Naive thymus-derived CD4-positive, alpha-beta T cell (primary cell): ENCODE measurements at regions of chr3 and their contacts with region 1.

Region 1: DNA sequence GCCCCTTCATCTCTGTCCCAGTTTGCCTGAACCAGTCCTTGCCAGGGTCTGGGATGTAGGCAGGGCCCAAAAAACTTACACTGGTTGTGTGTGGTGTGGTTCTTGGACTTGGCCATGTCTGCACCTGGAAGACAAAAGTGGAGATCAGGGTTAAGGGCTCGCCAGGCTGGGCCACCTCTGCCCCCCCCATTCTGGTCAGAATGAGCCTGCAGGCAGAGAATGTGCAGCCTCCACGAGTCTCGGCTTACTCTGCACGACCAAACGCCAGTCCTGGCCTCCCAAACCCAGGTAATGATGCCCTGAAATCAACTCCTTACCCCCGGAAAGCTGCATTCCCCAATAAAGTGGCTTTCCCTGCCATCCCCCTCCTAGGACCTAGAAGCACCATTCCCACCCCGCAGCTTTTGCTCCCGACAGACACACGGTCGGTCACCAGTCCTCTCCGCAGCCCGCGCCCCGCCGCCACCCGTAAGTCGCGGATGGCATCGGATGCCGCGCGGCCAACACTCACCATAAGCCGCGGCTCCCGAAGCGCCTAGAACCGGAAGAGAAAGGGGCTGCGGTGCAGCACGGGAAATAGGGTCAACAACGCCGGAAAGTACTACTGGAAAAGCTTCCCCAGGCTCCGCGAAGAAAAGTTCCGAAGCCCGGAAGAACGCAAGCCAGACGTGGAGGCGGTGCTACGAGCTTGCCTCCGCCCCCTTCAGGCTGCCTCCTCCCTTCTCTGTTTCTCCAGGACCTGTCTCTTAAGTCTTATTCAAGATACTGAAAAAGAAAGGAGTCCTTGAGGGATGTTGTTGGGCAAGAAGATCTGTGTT is at the start of gene RPL29:
- DNase-seq: peak; percentile 80 to 95 (median 92)
- ATAC-seq: peak; percentile 99
- H3K4me3 ChIP-seq: peak within 1 kb of the TSS; percentile 98
- H3K4me3 Mint-ChIP-seq: peak within 1 kb of the TSS; percentile 92 to 100 (median 98)
- H3K27ac ChIP-seq: peak within 1 kb of the TSS; percentile 95
- H3K27ac Mint-ChIP-seq: peak within 1 kb of the TSS; percentile 98 to 100 (median 100)
- H3K4me1 ChIP-seq: peaks cover 13 to 15% of the 10 kb centered on the region in 2 donors
- H3K4me1 Mint-ChIP-seq: peaks cover 19 to 44% (median 31%) of the 10 kb centered on the region in 7 donors
- H3K27me3 ChIP-seq: no peaks in the 10 kb centered on the region
- H3K27me3 Mint-ChIP-seq: peaks cover 0 to 16% (median 0%) of the 10 kb centered on the region in 5 donors
- total RNA-seq, gene RPL29: 1,152 to 1,744 (median 1,537) TPM

Region 2: DNA sequence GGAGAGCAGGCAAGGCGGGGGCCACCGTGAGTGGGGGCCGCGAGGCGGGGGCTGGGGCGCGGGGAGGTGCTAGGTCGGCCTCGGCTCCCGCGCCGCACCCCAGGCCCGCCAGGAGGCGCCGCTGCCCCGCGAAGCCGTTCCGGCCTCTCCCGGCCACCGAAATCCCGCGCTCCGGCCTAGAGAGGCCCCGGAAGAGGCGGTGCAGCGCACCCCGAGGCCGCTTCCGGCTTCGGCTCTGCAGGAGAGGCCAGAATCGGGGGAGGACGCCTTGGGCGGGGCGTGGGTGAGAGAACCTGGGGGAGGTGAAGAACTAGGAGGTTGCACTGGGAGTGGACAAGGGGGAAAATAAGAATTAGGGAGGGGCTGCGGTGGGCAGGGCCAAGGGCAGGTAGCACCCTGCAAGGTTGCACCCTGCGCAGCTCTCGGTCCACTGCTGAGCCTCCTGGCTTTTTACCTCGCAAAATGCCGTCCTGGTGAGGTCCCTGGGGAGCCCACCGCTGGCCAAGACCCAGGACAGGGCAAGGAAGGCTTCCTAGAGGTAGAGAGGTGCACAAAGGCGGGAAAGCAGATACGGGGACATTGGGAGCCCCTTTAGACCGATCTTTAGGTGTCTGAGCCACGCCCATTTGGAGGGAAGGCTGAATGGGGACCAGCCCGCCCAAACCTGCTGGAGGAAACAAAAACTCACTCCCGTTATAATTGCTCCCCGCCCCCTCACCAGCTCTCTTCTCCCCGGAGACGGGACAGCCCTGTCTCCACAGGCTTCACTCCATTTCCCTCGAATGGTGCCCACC is 1768.0 kb before region 1 on chr3:
- CTCF ChIA-PET with region 1: no interaction called
- POLR2A ChIA-PET with region 1: interaction called, 11 read pairs
- intact Hi-C with region 1: no loop called
- DNase-seq: peak; percentile 86 to 96 (median 91)
- ATAC-seq: peak; percentile 91
- H3K4me3 ChIP-seq: peak overlapping the region; percentile 88
- H3K4me3 Mint-ChIP-seq: peak overlapping the region; percentile 89 to 98 (median 96)
- H3K27ac ChIP-seq: peak overlapping the region; percentile 77
- H3K27ac Mint-ChIP-seq: peak overlapping the region; percentile 86 to 97 (median 93)
- H3K4me1 ChIP-seq: peaks cover 9 to 12% of the 10 kb centered on the region in 2 donors
- H3K4me1 Mint-ChIP-seq: peaks cover 16 to 36% (median 34%) of the 10 kb centered on the region in 7 donors
- H3K27me3 ChIP-seq: no peaks in the 10 kb centered on the region
- H3K27me3 Mint-ChIP-seq: peaks cover 0 to 17% (median 0%) of the 10 kb centered on the region in 5 donors

Region 3: DNA sequence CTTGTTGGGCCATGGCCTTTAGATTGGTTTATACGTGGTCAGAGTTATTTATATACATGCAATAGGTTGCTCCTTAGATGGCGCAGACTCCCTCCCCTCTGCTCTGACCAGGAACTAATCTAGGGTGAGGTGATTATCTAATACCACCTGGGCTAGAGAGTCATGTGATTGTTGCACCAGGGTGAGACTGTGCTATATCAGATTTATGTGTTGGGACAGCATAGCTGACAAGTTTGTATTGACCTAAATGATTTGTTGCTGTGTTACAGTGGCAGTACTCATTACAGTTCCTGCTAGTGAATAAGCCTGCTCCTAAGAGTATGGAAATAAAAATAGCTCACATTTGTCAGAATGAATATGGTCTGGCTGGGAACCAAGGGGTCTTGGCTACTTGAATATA is 209.3 kb before region 1 on chr3:
- CTCF ChIA-PET with region 1: no interaction called
- POLR2A ChIA-PET with region 1: no interaction called
- intact Hi-C with region 1: no loop called
- DNase-seq: no peak
- ATAC-seq: no peak
- H3K4me3 ChIP-seq: no peak overlapping the region
- H3K4me3 Mint-ChIP-seq: no peak overlapping the region
- H3K27ac ChIP-seq: no peak overlapping the region
- H3K27ac Mint-ChIP-seq: no peak overlapping the region
- H3K4me1 ChIP-seq: no peaks in the 10 kb centered on the region
- H3K4me1 Mint-ChIP-seq: peaks cover 0 to 9% (median 0%) of the 10 kb centered on the region in 7 donors
- H3K27me3 ChIP-seq: no peaks in the 10 kb centered on the region
- H3K27me3 Mint-ChIP-seq: peaks cover 0 to 41% (median 6%) of the 10 kb centered on the region in 5 donors

Region 4: GRCh38 chr3:51982782-51983577 is 12.6 kb before region 1 on chr3 and contains the start of gene ACY1:
- CTCF ChIA-PET with region 1: interaction called, 4 read pairs
- POLR2A ChIA-PET with region 1: interaction called, 22 read pairs
- intact Hi-C with region 1: loop called (anchors 1 kb)
- DNase-seq: peak; percentile 48 to 86 (median 56)
- ATAC-seq: peak; percentile 85
- H3K4me3 ChIP-seq: peak within 1 kb of the TSS; percentile 77
- H3K4me3 Mint-ChIP-seq: peak within 1 kb of the TSS; percentile 83 to 99 (median 94)
- H3K27ac ChIP-seq: peak within 1 kb of the TSS; percentile 83
- H3K27ac Mint-ChIP-seq: peak within 1 kb of the TSS; percentile 81 to 97 (median 90)
- H3K4me1 ChIP-seq: peaks cover 10 to 12% of the 10 kb centered on the region in 2 donors
- H3K4me1 Mint-ChIP-seq: peaks cover 18 to 27% (median 22%) of the 10 kb centered on the region in 7 donors
- H3K27me3 ChIP-seq: no peaks in the 10 kb centered on the region
- H3K27me3 Mint-ChIP-seq: no peaks in the 10 kb centered on the region
- total RNA-seq, gene ACY1: 7.8 to 28.3 (median 12.0) TPM

Region 5: DNA sequence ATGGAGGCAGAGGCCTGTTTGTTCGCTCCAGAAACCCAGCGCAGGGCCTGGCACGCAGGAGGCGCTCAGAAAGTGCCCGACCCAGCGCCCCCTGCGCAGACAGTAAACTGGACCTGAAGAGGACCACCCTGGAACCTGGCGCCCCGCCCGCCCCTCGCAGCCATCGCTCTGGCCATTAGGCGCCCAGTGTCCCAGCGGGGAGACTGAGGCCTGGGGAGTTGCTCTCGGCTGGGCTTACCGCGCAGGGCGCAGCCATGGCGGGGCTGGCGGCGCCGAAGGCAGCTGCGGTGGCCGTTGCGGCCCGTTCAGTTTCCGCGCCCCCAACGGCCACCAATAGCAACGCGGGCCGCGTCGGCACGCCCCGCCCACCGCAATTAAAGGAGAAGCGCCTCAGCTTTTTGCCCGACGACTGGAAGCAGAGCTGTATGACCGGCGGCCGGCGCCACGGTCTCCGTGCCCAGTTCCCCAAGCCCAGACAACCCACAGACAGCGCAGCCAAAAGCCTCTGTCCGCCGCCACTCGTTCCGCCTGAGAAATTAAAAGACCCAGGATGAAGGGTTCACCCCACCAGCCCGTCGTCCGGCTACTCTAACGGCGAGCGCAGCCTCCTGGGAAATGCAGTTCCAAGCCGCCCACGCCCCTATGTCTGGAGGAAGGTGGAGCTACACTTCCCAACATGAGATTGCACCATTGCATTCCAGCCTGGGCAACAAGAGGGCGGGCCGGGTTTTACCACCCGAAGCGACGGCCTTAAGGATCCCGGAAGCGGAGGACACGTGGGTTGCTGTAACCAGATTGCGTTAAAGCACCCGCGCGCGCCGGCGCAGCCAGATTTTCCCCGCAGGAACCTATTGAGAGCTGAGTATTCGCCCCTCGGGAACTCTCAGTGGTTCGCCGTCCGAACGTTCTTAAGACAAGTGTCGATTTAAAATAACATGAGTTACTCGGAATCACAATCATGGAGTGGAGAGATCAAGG is 158.9 kb after region 1 on chr3 and contains the start of gene POC1A:
- CTCF ChIA-PET with region 1: interaction called, 3 read pairs
- POLR2A ChIA-PET with region 1: interaction called, 4 read pairs
- intact Hi-C with region 1: loop called in 1 of 2 experiments (anchors 1 kb)
- DNase-seq: peak; percentile 73 to 90 (median 82)
- ATAC-seq: peak; percentile 92
- H3K4me3 ChIP-seq: peak within 1 kb of the TSS; percentile 98
- H3K4me3 Mint-ChIP-seq: peak within 1 kb of the TSS; percentile 88 to 98 (median 96)
- H3K27ac ChIP-seq: peak within 1 kb of the TSS; percentile 85
- H3K27ac Mint-ChIP-seq: peak within 1 kb of the TSS; percentile 87 to 98 (median 94)
- H3K4me1 ChIP-seq: peaks cover 4 to 6% of the 10 kb centered on the region in 2 donors
- H3K4me1 Mint-ChIP-seq: peaks cover 5 to 22% (median 6%) of the 10 kb centered on the region in 7 donors
- H3K27me3 ChIP-seq: no peaks in the 10 kb centered on the region
- H3K27me3 Mint-ChIP-seq: peaks cover 0 to 1% (median 0%) of the 10 kb centered on the region in 5 donors
- total RNA-seq, gene POC1A: 0.58 to 19.7 (median 1.2) TPM

Region 6: DNA sequence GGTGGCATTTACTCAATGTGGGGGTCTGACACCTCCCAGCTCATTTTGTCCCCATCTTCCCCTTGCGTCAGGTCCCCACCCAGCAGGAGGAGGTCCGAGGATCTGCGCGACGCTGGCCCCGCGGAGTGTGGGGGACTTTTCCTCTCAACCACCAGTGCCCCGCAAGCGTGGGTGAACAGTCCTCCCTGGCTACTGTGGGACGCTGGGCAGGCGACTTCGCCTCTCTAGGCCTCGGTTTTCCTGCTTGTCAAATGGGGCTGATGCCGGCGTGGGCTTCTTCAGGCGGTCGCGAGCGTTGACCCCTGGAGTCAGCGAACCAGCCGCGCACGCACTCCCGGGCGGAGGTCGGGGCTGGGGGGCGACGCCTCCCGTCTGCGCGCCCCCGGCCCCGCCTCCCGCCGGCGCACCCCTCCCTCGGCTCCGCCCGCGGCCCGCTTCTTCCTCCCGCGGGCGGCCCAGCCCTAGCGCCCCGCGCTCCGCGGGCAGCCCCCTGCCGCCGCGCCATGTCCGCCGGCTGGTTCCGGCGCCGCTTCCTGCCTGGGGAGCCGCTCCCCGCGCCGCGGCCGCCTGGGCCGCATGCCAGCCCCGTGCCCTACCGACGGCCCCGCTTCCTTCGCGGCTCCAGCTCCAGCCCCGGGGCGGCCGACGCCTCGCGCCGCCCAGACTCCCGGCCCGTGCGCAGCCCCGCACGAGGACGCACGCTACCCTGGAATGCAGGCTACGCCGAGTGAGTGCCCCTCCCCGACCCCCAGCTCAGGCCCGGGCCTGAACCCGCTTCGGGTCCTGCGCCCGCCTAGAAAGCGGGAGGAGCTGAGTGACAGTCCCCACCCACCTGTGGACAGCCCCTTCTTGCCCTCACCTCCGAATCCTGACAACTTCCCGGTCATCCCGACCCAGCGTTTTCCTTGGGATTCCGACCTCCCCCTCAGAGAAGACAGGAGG is 250.0 kb after region 1 on chr3 and contains the start of gene PPM1M:
- CTCF ChIA-PET with region 1: no interaction called
- POLR2A ChIA-PET with region 1: no interaction called
- intact Hi-C with region 1: no loop called
- DNase-seq: peak; percentile 57 to 77 (median 73)
- ATAC-seq: peak; percentile 72
- H3K4me3 ChIP-seq: peak within 1 kb of the TSS; percentile 79
- H3K4me3 Mint-ChIP-seq: peak within 1 kb of the TSS; percentile 83 to 91 (median 87)
- H3K27ac ChIP-seq: peak within 1 kb of the TSS; percentile 91
- H3K27ac Mint-ChIP-seq: peak within 1 kb of the TSS; percentile 83 to 99 (median 95)
- H3K4me1 ChIP-seq: peaks cover 48 to 81% of the 10 kb centered on the region in 2 donors
- H3K4me1 Mint-ChIP-seq: peaks cover 36 to 91% (median 84%) of the 10 kb centered on the region in 7 donors
- H3K27me3 ChIP-seq: no peaks in the 10 kb centered on the region
- H3K27me3 Mint-ChIP-seq: no peaks in the 10 kb centered on the region
- total RNA-seq, gene PPM1M: 55.8 to 81.0 (median 74.5) TPM

Region 7: GRCh38 chr3:52291508-52292181 is 296.1 kb after region 1 on chr3:
- CTCF ChIA-PET with region 1: no interaction called
- POLR2A ChIA-PET with region 1: no interaction called
- intact Hi-C with region 1: loop called in 1 of 2 experiments (anchors 5 kb)
- DNase-seq: peak in 6 of 9 donors; percentile 42 to 59 (median 49)
- ATAC-seq: peak; percentile 21
- H3K4me3 ChIP-seq: no peak overlapping the region
- H3K4me3 Mint-ChIP-seq: peak overlapping the region in 8 of 10 donors; percentile 1 to 84 (median 30)
- H3K27ac ChIP-seq: no peak overlapping the region
- H3K27ac Mint-ChIP-seq: peak overlapping the region in 4 of 9 donors; percentile 11 to 86 (median 72)
- H3K4me1 ChIP-seq: peaks cover 10 to 22% of the 10 kb centered on the region in 2 donors
- H3K4me1 Mint-ChIP-seq: peaks cover 19 to 36% (median 30%) of the 10 kb centered on the region in 7 donors
- H3K27me3 ChIP-seq: no peaks in the 10 kb centered on the region
- H3K27me3 Mint-ChIP-seq: peaks cover 0 to 3% (median 0%) of the 10 kb centered on the region in 5 donors

Region 8: GRCh38 chr3:52798978-52799476 is 803.5 kb after region 1 on chr3:
- CTCF ChIA-PET with region 1: no interaction called
- POLR2A ChIA-PET with region 1: no interaction called
- intact Hi-C with region 1: no loop called
- DNase-seq: no peak
- ATAC-seq: peak; percentile 52
- H3K4me3 ChIP-seq: no peak overlapping the region
- H3K4me3 Mint-ChIP-seq: no peak overlapping the region
- H3K27ac ChIP-seq: no peak overlapping the region
- H3K27ac Mint-ChIP-seq: no peak overlapping the region
- H3K4me1 ChIP-seq: no peaks in the 10 kb centered on the region
- H3K4me1 Mint-ChIP-seq: peaks cover 0 to 8% (median 0%) of the 10 kb centered on the region in 7 donors
- H3K27me3 ChIP-seq: no peaks in the 10 kb centered on the region
- H3K27me3 Mint-ChIP-seq: peaks cover 0 to 5% (median 0%) of the 10 kb centered on the region in 5 donors

Region 9: GRCh38 chr3:53347261-53348064 is 1351.9 kb after region 1 on chr3 and contains the start of gene DCP1A:
- CTCF ChIA-PET with region 1: no interaction called
- POLR2A ChIA-PET with region 1: no interaction called
- intact Hi-C with region 1: loop called in 1 of 2 experiments (anchors 10 kb)
- DNase-seq: peak; percentile 93 to 98 (median 96)
- ATAC-seq: peak; percentile 96
- H3K4me3 ChIP-seq: peak within 1 kb of the TSS; percentile 93
- H3K4me3 Mint-ChIP-seq: peak within 1 kb of the TSS; percentile 96 to 99 (median 99)
- H3K27ac ChIP-seq: peak within 1 kb of the TSS; percentile 98
- H3K27ac Mint-ChIP-seq: peak within 1 kb of the TSS; percentile 98 to 100 (median 99)
- H3K4me1 ChIP-seq: peaks cover 6 to 21% of the 10 kb centered on the region in 2 donors
- H3K4me1 Mint-ChIP-seq: peaks cover 13 to 58% (median 42%) of the 10 kb centered on the region in 7 donors
- H3K27me3 ChIP-seq: no peaks in the 10 kb centered on the region
- H3K27me3 Mint-ChIP-seq: no peaks in the 10 kb centered on the region
- total RNA-seq, gene DCP1A: 34.0 to 51.3 (median 40.1) TPM